CD4-positive, alpha-beta T cell (primary cell): ENCODE measurements at regions of chr3 and their contacts with region 1.

Region 1: DNA sequence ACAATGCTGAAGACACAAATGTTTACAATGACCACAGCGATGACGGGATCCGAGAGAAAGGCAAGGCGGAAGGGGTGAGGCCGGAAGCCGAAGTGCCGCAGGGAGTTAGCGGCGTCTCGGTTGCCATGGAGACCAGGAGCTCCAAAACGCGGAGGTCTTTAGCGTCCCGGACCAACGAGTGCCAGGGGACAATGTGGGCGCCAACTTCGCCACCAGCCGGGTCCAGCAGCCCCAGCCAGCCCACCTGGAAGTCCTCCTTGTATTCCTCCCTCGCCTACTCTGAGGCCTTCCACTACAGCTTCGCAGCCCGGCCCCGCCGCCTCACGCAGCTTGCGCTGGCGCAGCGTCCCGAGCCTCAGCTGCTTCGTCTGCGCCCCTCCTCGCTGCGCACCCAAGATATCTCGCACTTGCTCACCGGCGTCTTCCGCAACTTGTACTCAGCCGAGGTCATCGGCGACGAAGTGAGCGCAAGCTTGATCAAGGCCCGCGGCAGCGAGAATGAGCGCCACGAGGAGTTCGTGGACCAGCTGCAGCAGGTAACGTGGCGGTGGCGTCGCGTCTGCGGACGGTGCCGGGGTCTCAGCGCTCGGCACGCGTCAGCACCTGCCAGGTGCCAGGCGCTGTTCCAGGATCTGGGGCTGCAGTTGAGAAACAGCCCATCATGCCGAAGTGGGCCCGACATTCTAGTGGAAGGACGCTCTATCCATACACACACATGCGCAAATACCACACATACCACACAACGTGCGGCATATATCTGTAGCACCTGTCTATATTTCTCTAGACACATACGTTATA is at the start of gene DLEC1:
- DNase-seq: peak; percentile 70 to 95 (median 80)
- ATAC-seq: peak; percentile 59
- H3K4me3 ChIP-seq: peak within 1 kb of the TSS; percentile 76
- H3K4me3 Mint-ChIP-seq: peak within 1 kb of the TSS; percentile 65
- H3K27ac ChIP-seq: peak within 1 kb of the TSS; percentile 76 to 96
- H3K27ac Mint-ChIP-seq: peak within 1 kb of the TSS; percentile 91
- H3K4me1 ChIP-seq: peaks cover 46% of the 10 kb centered on the region
- H3K4me1 Mint-ChIP-seq: peaks cover 28% of the 10 kb centered on the region
- H3K27me3 ChIP-seq: no peaks in the 10 kb centered on the region
- H3K27me3 Mint-ChIP-seq: no peaks in the 10 kb centered on the region
- CTCF ChIP-seq: no peak
- total RNA-seq, gene DLEC1: 4.4 to 5.1 TPM

Region 2: DNA sequence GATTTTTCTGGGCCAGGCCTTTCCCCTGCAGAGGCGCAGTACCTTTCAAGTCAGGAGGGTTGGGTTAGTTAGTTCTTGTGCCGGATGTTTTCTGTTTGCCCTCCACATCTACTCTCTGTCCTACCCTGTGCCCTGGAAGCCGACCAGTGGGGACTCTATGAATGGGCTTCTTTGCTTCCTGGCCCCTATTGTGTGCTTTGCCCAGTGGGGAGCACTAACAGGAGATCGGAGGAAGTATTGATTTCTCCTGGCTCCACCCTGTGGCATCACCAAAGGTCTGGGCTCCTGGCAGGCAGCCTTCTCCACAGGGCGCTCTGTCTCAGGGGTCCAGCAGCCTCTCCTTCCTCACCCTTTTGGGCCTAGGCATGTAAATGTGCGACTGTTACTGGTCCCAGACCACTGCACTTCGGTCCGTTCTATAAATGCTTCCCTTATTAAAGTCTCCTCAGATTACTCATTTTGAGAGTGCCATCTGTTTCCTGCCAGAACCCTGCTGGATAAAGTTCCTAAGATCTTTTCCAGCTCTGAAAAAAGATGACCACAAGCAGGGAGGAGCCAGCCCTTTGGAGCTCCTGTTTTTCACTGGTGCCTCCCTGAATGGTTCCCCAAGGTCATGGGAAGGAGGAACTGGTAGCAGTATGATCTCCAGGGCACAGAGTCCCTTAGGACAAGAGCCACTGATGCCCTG is 133.2 kb before region 1 on chr3:
- CTCF ChIA-PET with region 1: no interaction called
- POLR2A ChIA-PET with region 1: no interaction called
- intact Hi-C with region 1: no loop called
- DNase-seq: no peak
- ATAC-seq: no peak
- H3K4me3 ChIP-seq: no peak overlapping the region
- H3K4me3 Mint-ChIP-seq: peak overlapping the region; percentile 27
- H3K27ac ChIP-seq: no peak overlapping the region
- H3K27ac Mint-ChIP-seq: no peak overlapping the region
- H3K4me1 ChIP-seq: peaks cover 19% of the 10 kb centered on the region
- H3K4me1 Mint-ChIP-seq: peaks cover 34% of the 10 kb centered on the region
- H3K27me3 ChIP-seq: no peaks in the 10 kb centered on the region
- H3K27me3 Mint-ChIP-seq: no peaks in the 10 kb centered on the region
- CTCF ChIP-seq: no peak

Region 3: DNA sequence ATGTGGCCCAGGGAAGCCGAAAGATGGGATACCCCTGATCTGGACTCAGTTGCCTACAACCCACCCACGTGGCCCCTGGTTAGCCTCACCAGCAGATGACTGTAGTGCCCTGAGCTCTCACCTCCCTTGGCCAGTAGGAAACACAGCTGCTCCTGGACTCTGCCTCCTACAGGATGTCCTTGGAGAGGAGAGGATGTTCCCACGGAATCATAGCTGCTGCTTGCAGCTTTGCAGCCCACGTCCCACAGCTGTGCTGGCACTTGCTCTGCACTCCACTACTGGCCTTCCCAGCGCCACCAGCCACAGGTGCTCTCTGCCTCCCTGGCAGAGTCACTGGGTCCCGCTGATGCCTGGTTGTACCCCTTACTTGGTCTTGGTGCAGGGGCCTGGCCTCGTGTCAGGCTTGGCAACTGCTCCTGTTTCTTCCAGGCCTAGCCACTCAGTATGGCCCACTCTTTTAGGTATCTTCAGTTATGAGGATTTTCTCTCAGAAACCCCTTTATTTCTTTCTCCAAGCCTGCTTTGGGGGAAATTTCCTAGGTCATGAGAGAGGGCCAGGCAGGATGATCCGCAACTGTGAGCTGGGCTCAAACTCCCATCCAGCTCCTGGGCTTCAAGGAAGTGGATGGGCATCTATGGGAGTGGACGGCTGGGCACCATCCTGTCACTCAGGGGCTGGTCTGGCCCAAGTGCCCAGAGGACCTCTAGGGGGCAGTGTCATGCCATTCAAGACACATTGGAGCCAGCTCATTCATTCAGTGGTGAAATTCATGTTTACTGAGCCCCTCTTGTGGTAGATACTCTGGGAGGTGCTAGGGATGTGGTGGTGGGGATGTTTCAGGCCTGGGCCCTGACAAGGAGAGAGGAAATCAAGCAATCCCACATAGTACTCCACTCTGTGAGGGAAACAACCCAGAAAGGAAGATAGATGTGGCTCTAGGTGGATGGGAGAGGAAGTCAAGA is 64.9 kb before region 1 on chr3:
- CTCF ChIA-PET with region 1: interaction called, 11 read pairs
- POLR2A ChIA-PET with region 1: no interaction called
- intact Hi-C with region 1: no loop called
- DNase-seq: peak; percentile 49 to 85 (median 62)
- ATAC-seq: peak; percentile 97
- H3K4me3 ChIP-seq: no peak overlapping the region
- H3K4me3 Mint-ChIP-seq: no peak overlapping the region
- H3K27ac ChIP-seq: no peak overlapping the region
- H3K27ac Mint-ChIP-seq: no peak overlapping the region
- H3K4me1 ChIP-seq: peaks cover 5% of the 10 kb centered on the region
- H3K4me1 Mint-ChIP-seq: peaks cover 4% of the 10 kb centered on the region
- H3K27me3 ChIP-seq: no peaks in the 10 kb centered on the region
- H3K27me3 Mint-ChIP-seq: no peaks in the 10 kb centered on the region
- CTCF ChIP-seq: peak; percentile 85

Region 4: DNA sequence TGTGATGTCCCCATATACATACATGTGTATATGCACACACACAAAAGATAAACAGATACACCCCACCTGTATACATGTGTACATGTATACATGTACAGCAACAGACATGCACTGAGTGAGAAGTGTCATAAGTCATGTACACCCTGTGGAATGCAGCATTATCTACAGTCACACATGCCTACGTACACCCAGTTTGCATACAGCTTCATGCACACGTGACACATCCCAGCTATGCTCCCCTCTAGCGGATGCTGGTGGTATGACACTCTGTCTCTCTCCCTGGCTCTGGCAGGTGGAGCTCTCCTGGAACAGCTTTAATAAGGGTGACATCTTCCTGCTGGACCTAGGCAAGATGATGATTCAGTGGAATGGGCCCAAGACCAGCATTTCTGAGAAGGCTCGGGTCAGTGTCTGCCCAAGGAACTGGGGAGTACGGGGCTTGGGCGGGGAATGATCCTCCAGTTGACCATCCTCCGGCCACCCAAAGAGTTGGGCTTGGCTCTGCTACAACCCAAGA is 42.5 kb before region 1 on chr3:
- CTCF ChIA-PET with region 1: interaction called, 14 read pairs
- POLR2A ChIA-PET with region 1: interaction called, 6 read pairs
- intact Hi-C with region 1: no loop called
- DNase-seq: peak; percentile 66 to 92 (median 77)
- ATAC-seq: peak; percentile 70
- H3K4me3 ChIP-seq: no peak overlapping the region
- H3K4me3 Mint-ChIP-seq: peak overlapping the region; percentile 81
- H3K27ac ChIP-seq: peak overlapping the region in 1 of 2 donors; percentile 12
- H3K27ac Mint-ChIP-seq: peak overlapping the region; percentile 95
- H3K4me1 ChIP-seq: peaks cover 57% of the 10 kb centered on the region
- H3K4me1 Mint-ChIP-seq: peaks cover 65% of the 10 kb centered on the region
- H3K27me3 ChIP-seq: no peaks in the 10 kb centered on the region
- H3K27me3 Mint-ChIP-seq: no peaks in the 10 kb centered on the region
- CTCF ChIP-seq: peak; percentile 94

Region 5: DNA sequence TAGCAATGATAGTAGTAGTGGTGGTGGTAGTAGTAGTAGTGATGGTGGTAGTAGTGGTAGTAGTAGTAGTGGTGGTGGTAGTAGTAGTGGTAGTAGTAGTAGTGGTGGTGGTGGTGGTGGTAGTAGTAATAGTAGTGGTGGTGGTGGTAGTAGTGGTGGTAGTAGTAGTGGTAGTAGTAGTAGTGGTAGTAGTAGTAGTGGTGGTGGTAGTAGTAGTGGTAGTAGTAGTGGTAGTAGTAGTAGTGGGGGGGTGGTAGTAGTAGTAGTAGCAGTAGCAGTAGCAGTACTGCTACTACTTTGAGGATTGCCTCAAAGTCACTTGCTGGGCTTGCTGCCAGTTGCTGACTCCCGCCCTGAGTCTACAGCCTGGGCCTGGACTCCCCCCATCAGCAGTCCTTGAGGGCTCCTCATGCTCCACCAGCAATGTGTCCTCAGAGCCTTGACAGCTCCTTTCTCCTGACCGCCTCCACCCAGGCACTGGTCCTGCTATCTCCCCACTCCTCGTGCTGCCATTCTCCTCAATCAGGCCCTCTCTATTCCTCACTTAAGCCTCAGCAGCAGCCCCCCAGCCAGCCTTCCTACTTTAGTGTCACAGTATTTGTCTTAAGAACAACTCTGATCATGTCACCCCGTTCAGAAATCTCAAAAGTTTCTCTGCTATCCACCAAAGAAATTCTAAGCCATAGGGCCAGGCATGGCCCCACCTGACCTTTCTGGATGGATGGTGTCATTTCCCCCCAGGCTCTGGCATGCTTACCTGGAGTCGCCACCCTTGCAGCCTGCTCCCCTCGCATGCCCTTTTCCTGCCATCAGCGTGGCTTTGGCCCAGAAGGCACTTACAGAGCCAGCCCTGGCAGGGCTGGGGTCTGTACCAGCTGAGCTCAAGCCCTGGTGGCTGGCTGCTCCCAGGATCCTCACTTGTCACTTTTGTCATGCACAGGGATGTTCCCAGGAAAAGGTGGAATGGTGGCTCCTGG is 45.3 kb after region 1 on chr3:
- CTCF ChIA-PET with region 1: no interaction called
- POLR2A ChIA-PET with region 1: no interaction called
- intact Hi-C with region 1: loop called in 1 of 2 experiments (anchors 2 kb)
- DNase-seq: peak in 4 of 14 experiments; percentile 7 to 69 (median 50)
- ATAC-seq: peak; percentile 70
- H3K4me3 ChIP-seq: no peak overlapping the region
- H3K4me3 Mint-ChIP-seq: peak overlapping the region; percentile 71
- H3K27ac ChIP-seq: peak overlapping the region in 1 of 2 donors; percentile 19
- H3K27ac Mint-ChIP-seq: peak overlapping the region; percentile 78
- H3K4me1 ChIP-seq: no peaks in the 10 kb centered on the region
- H3K4me1 Mint-ChIP-seq: no peaks in the 10 kb centered on the region
- H3K27me3 ChIP-seq: no peaks in the 10 kb centered on the region
- H3K27me3 Mint-ChIP-seq: no peaks in the 10 kb centered on the region
- CTCF ChIP-seq: no peak

Region 6: DNA sequence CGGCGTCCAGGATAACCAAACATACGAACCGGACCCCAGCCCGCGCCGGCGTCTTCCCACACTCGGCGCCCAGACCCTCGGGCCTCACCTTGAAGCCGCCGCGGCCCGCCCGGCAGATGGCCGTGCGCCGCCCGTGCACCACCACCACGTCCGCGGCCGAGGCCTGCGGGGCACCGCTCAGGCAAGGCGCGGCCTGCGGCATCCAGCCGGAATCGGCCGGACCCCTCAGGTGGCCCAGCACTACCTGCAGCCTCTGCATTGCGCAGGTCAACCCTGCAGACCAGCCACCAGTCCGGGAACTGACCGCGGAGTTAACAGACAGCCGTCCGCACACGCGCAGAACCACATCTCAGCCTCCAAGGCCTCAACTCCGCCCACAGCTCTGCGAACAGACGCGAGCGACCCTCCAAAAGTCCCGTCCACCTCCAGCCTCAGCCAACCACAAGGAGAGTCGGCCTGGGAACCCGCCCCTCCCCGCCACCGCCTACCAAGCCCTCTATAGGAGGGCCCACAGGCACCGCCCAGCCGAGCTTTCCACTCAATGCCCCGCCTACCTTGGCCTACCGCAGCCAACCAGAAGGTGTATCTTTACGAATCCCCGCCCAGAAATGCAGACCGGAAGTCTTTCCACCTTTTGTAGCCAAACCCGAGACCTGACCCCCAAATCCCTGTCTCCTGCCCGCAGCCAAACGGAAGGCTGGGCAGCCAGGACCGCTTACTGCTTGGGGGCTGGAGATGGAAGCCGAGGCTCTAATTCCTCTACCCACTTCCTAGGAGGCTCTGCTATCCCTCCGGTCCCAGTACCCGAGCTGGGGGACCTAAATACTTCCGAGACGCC is 97.7 kb after region 1 on chr3 and contains the start of gene ACAA1:
- CTCF ChIA-PET with region 1: interaction called, 4 read pairs
- POLR2A ChIA-PET with region 1: interaction called, 12 read pairs
- intact Hi-C with region 1: loop called in 1 of 2 experiments (anchors 5 kb)
- DNase-seq: peak; percentile 91 to 99 (median 96)
- ATAC-seq: peak; percentile 84
- H3K4me3 ChIP-seq: peak within 1 kb of the TSS; percentile 95
- H3K4me3 Mint-ChIP-seq: peak within 1 kb of the TSS; percentile 99
- H3K27ac ChIP-seq: peak within 1 kb of the TSS; percentile 80 to 83
- H3K27ac Mint-ChIP-seq: peak within 1 kb of the TSS; percentile 92
- H3K4me1 ChIP-seq: peaks cover 76% of the 10 kb centered on the region
- H3K4me1 Mint-ChIP-seq: peaks cover 77% of the 10 kb centered on the region
- H3K27me3 ChIP-seq: no peaks in the 10 kb centered on the region
- H3K27me3 Mint-ChIP-seq: no peaks in the 10 kb centered on the region
- CTCF ChIP-seq: no peak
- total RNA-seq, gene ACAA1: 56.4 to 58.9 TPM

Region 7: DNA sequence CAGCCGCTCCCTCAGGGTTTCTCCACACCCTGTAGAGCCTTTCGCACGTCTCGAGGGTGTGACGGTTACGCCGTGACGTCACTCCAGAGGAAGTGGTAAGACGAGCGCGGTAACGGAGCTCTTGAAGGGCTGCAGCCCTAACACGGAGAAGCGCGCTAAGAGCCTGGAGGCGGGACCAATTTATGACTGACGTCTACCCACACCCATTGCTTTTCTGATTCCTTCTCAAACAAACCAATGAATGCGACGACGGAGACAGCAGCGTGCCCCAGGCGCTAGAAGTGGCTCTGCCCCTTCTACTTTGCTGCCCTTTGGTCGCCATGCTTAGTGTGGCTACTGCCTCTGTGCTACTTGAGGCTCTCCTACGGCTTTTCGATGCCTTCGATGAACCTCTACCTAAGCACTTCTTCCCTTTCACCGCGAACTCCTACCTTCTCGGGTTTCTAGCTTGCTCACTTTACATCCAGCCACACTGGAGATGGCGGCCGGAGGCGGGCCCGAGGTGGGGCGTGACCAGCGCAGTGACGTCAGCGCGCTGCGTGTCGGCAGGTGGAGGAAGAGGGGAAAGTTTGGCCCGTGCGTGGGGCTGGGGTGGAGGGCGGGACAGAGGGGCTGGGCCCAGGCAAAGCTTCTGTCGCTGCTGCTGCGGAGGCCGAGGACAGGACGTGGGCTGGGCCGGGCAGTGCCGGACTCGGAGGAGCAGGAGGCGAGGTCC is 125.8 kb after region 1 on chr3 and contains the start of gene OXSR1:
- CTCF ChIA-PET with region 1: no interaction called
- POLR2A ChIA-PET with region 1: interaction called, 13 read pairs
- intact Hi-C with region 1: no loop called
- DNase-seq: peak; percentile 91 to 100 (median 95)
- ATAC-seq: peak; percentile 89
- H3K4me3 ChIP-seq: peak within 1 kb of the TSS; percentile 80
- H3K4me3 Mint-ChIP-seq: peak within 1 kb of the TSS; percentile 91
- H3K27ac ChIP-seq: peak within 1 kb of the TSS; percentile 98 to 100
- H3K27ac Mint-ChIP-seq: peak within 1 kb of the TSS; percentile 99
- H3K4me1 ChIP-seq: peaks cover 37% of the 10 kb centered on the region
- H3K4me1 Mint-ChIP-seq: peaks cover 52% of the 10 kb centered on the region
- H3K27me3 ChIP-seq: no peaks in the 10 kb centered on the region
- H3K27me3 Mint-ChIP-seq: no peaks in the 10 kb centered on the region
- CTCF ChIP-seq: no peak
- total RNA-seq, gene OXSR1: 28.3 to 30.3 TPM

Region 8: GRCh38 chr3:38297947-38298711 is 258.8 kb after region 1 on chr3:
- CTCF ChIA-PET with region 1: no interaction called
- POLR2A ChIA-PET with region 1: no interaction called
- intact Hi-C with region 1: no loop called
- DNase-seq: peak in 2 of 14 experiments; percentile 9 to 10
- ATAC-seq: no peak
- H3K4me3 ChIP-seq: no peak overlapping the region
- H3K4me3 Mint-ChIP-seq: no peak overlapping the region
- H3K27ac ChIP-seq: no peak overlapping the region
- H3K27ac Mint-ChIP-seq: no peak overlapping the region
- H3K4me1 ChIP-seq: no peaks in the 10 kb centered on the region
- H3K4me1 Mint-ChIP-seq: no peaks in the 10 kb centered on the region
- H3K27me3 ChIP-seq: peaks cover 0 to 2% of the 10 kb centered on the region in 2 experiments
- H3K27me3 Mint-ChIP-seq: no peaks in the 10 kb centered on the region
- CTCF ChIP-seq: peak; percentile 27